H1 (cell line): ENCODE measurements at regions of chr12 and their contacts with region 1.

Region 1: GRCh38 chr12:108597559-108598471 is at the start of gene TMEM119:
- DNase-seq: no peak
- H3K4me3 ChIP-seq: no peak within 1 kb of the TSS
- H3K27ac ChIP-seq: no peak within 1 kb of the TSS
- H3K4me1 ChIP-seq: peaks cover 0 to 14% (median 0%) of the 10 kb centered on the region in 4 experiments; a peak in 3 of 7 replicates
- H3K27me3 ChIP-seq: no peaks in the 10 kb centered on the region; a peak in 1 of 7 replicates
- CTCF ChIP-seq: no peak
- EP300 ChIP-seq: no peak
- POLR2A ChIP-seq: no peak
- RAD21 ChIP-seq: no peak
- total RNA-seq, gene TMEM119: 0.48 and 0.61 TPM in 2 replicates

Region 2: GRCh38 chr12:108570743-108571608 is 26.8 kb before region 1 on chr12:
- CTCF ChIA-PET with region 1: interaction called, 523 read pairs
- POLR2A ChIA-PET with region 1: interaction called, 4 read pairs
- DNase-seq: peak in 1 of 2 experiments; percentile 41
- H3K4me3 ChIP-seq: no peak overlapping the region
- H3K27ac ChIP-seq: no peak overlapping the region
- H3K4me1 ChIP-seq: no peaks in the 10 kb centered on the region
- H3K27me3 ChIP-seq: no peaks in the 10 kb centered on the region
- CTCF ChIP-seq: peak in 2 of 3 experiments; percentile 37 to 62; a peak in 3 of 4 replicates
- EP300 ChIP-seq: no peak
- POLR2A ChIP-seq: no peak
- RAD21 ChIP-seq: peak; percentile 78 to 85

Region 3: GRCh38 chr12:108611884-108612415 is 14.1 kb after region 1 on chr12:
- CTCF ChIA-PET with region 1: interaction called, 63 read pairs
- POLR2A ChIA-PET with region 1: interaction called, 6 read pairs
- DNase-seq: peak; percentile 53 to 89
- H3K4me3 ChIP-seq: no peak overlapping the region
- H3K27ac ChIP-seq: no peak overlapping the region
- H3K4me1 ChIP-seq: peaks cover 0 to 12% (median 1%) of the 10 kb centered on the region in 4 experiments; a peak in 4 of 7 replicates
- H3K27me3 ChIP-seq: no peaks in the 10 kb centered on the region
- CTCF ChIP-seq: peak; percentile 60 to 92 (median 82)
- EP300 ChIP-seq: no peak
- POLR2A ChIP-seq: no peak
- RAD21 ChIP-seq: peak; percentile 58 to 67